ENCODE measurements at regions of chr6 and their contacts with region 1.

Region 1: DNA sequence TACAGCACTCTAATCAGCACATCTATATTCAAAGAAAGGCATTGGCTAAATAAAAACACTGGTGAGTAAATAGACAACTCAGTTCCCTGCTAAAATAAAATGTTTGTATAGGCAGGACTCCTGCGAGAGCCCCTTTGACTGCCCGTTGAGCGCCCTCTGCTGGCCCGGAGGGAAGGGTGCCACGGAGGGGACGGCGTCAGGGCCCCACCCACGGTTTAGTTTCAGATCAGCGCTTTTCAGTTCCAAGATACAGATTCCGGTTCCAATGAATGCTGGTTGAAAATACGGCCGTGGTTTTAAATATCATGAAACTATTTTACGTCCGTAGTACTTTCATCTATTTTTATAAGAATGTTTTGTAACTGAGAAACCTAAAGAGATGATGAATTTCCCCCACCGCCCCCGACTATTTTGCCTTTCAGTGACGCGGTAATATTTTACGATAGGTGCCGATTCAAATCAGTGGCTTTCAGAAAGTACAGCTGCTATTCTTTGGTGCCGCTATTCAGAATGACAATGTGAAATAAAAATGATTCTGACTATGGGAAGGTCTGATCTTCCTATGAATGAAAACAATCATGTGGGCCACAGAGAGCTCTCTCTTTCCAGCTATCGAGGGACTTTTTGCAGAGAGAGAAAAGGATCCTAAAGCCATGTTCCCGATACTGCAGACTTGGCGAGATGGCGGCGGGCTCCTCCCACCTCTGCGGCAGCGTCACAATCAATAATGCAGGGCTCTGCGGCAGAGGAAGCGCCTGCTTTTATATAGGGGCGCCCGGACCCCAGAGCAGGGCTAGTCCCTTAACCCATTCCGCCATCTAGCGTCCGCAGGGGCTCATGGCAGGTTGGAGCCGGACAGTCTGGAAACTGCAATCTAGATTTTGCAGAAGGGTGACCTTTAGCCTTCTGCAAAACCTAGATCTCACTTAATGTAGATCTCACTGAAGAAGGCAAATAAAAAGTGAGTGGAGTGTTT is 10.6 kb upstream of the CCN6 start:
- DNase-seq: peak; percentile 45
- ATAC-seq: peak; percentile 97
- H3K4me3 ChIP-seq: peak overlapping the region; percentile 94
- H3K27ac ChIP-seq: peak overlapping the region; percentile 51
- H3K4me1 ChIP-seq: no peaks in the 10 kb centered on the region
- H3K27me3 ChIP-seq: no peaks in the 10 kb centered on the region
- CTCF ChIP-seq: peak; percentile 97 to 98 (median 97)
- EP300 ChIP-seq: peak in 1 of 2 experiments; percentile 50; a peak in 1 of 4 replicates
- POLR2A ChIP-seq: 0 out of 2 replicates have a peak, but pooled peaks have one; percentile 32
- RAD21 ChIP-seq: peak; percentile 98

Region 2: GRCh38 chr6:111057074-111057752 is 986.1 kb before region 1 on chr6:
- CTCF ChIA-PET with region 1: interaction called, 3 read pairs
- POLR2A ChIA-PET with region 1: no interaction called
- RAD21 ChIA-PET with region 1: interaction called, 3 read pairs
- SMC1A ChIA-PET with region 1: interaction called, 3 read pairs
- in situ Hi-C with region 1: no loop called
- intact Hi-C with region 1: loop called (anchors 2 kb)
- DNase-seq: no peak
- ATAC-seq: peak; percentile 96
- H3K4me3 ChIP-seq: no peak overlapping the region
- H3K27ac ChIP-seq: no peak overlapping the region
- H3K4me1 ChIP-seq: no peaks in the 10 kb centered on the region
- H3K27me3 ChIP-seq: no peaks in the 10 kb centered on the region
- CTCF ChIP-seq: peak; percentile 73 to 90 (median 86)
- EP300 ChIP-seq: no peak
- POLR2A ChIP-seq: no peak
- RAD21 ChIP-seq: peak; percentile 79

Region 3: GRCh38 chr6:111478749-111479148 is 564.6 kb before region 1 on chr6:
- CTCF ChIA-PET with region 1: interaction called, 9 read pairs
- POLR2A ChIA-PET with region 1: no interaction called
- RAD21 ChIA-PET with region 1: interaction called, 16 read pairs
- SMC1A ChIA-PET with region 1: interaction called, 3 read pairs
- in situ Hi-C with region 1: no loop called
- intact Hi-C with region 1: loop called (anchors 1 kb)
- DNase-seq: peak; percentile 49
- ATAC-seq: peak; percentile 60
- H3K4me3 ChIP-seq: 0 out of 2 replicates have a peak overlapping the region, but pooled peaks have one; percentile 0
- H3K27ac ChIP-seq: peak overlapping the region; percentile 5
- H3K4me1 ChIP-seq: peaks cover 12% of the 10 kb centered on the region; the same call in 1 of the 2 replicates
- H3K27me3 ChIP-seq: no peaks in the 10 kb centered on the region
- CTCF ChIP-seq: peak; percentile 33 to 71 (median 63); a peak in 4 of 6 replicates
- EP300 ChIP-seq: no peak
- POLR2A ChIP-seq: no peak
- RAD21 ChIP-seq: peak; percentile 70

Region 4: DNA sequence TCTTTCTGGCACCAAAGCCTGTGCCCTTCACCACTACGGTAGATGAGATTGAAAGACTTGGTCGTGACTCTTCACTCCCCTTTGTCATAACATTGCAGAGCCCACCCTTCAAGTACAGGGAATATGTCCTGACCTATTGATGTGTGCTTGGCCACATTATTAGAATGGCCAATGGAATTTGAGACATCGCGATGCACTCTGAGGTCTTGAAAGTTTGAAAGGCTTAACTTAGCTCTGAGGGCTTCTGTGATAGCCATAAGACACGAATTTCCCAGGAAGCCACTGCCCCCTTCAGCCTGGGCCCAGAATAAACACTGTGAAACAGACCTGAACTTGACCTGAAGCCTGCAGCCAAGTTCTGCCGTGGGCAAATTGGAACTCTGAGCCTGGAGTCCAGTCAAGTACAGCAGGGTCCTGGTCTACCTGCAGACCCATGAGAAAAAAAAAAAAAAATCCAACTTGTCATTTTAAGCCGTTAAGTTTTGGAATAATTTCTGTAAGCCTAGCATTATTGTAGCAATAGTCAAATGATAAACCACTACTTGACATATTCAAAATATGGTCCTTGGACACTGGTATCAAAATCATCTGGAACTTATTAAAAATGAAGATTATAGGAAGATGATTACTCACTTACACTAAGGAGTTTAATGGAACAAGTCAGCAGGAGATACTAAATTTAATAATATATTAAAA is 400.7 kb before region 1 on chr6:
- CTCF ChIA-PET with region 1: interaction called, 3 read pairs
- POLR2A ChIA-PET with region 1: interaction called, 4 read pairs
- RAD21 ChIA-PET with region 1: interaction called, 5 read pairs
- SMC1A ChIA-PET with region 1: interaction called, 5 read pairs
- in situ Hi-C with region 1: no loop called
- intact Hi-C with region 1: loop called (anchors 5 kb)
- DNase-seq: peak; percentile 21
- ATAC-seq: peak; percentile 95
- H3K4me3 ChIP-seq: no peak overlapping the region
- H3K27ac ChIP-seq: no peak overlapping the region
- H3K4me1 ChIP-seq: no peaks in the 10 kb centered on the region
- H3K27me3 ChIP-seq: no peaks in the 10 kb centered on the region
- CTCF ChIP-seq: peak; percentile 57 to 77 (median 65)
- EP300 ChIP-seq: no peak
- POLR2A ChIP-seq: no peak
- RAD21 ChIP-seq: peak; percentile 75

Region 5: DNA sequence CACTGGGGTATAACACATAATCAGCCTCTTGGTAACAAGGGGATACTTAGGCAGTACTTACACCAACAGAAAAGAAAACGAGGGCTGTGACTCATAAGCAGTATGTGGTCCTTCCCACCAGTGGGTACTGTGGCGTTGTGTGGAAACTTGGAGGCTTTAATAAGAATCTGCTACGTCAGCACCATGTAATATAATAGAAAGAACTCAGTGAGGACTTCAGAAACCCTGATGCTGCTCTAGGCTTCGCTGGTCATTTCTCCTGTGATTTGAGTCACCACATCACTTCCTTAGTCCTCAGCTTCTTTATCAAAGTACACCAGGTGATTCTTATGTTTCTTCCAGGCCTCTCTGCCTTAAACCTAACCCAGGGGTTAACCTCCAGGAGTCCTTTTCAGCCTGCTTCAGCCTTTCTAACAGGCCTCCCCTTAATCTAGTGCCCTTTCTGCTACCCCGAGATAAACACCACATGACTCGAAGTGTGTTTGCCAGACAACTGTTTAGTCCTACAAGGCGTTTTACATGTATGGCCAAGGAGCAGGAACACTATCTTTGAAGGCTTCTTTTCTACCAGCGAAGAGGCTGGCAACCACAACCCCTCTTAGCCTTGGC is 238.6 kb before region 1 on chr6:
- CTCF ChIA-PET with region 1: interaction called, 4 read pairs
- POLR2A ChIA-PET with region 1: no interaction called
- RAD21 ChIA-PET with region 1: interaction called, 6 read pairs
- SMC1A ChIA-PET with region 1: interaction called, 5 read pairs
- in situ Hi-C with region 1: no loop called
- intact Hi-C with region 1: loop called (anchors 2 kb)
- DNase-seq: peak; percentile 84
- ATAC-seq: peak; percentile 77
- H3K4me3 ChIP-seq: no peak overlapping the region
- H3K27ac ChIP-seq: peak overlapping the region; percentile 70
- H3K4me1 ChIP-seq: peaks cover 70% of the 10 kb centered on the region
- H3K27me3 ChIP-seq: no peaks in the 10 kb centered on the region
- CTCF ChIP-seq: peak in 2 of 3 experiments; percentile 24 to 35; a peak in 2 of 6 replicates
- EP300 ChIP-seq: peak; percentile 65 to 88; a peak in 2 of 4 replicates
- POLR2A ChIP-seq: no peak
- RAD21 ChIP-seq: peak; percentile 62

Region 6: DNA sequence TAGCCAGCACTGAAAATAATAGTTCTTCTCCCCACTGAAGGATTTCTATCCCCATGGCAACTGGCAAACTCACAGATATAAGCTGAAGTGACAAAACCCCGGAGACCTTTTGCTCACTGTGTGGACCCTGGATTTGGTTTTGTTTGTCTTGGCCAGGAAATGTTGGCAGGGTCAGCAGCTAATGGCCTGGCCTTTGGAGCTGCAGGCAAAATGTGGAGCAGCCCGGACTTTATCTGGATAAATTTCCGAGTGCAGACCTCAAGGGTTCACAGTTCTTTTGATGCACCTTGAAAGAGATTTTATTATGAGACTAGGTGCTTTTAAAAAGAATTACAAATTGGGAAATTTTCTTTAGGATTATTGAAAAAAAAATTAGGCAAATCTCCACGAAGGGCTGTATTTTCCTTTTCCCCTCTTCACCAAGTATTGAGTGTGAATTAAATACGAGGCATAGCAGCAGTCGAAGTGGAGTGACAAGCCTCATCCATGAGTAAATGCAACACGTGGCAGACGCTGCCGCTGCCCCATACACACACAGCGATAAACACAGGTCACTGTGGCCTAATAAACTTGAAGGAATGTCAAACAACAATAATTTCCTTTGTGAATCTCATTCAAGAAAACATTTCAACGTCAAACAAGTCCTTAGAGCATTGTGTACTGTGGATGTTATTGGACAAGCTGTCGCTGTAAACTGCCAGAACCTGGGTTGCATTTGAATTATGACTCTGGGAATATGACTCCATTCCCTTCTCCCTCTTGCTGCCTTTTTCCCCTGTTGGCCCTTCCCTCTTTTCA is 24.5 kb before region 1 on chr6:
- CTCF ChIA-PET with region 1: interaction called, 55 read pairs
- POLR2A ChIA-PET with region 1: interaction called, 3 read pairs
- RAD21 ChIA-PET with region 1: interaction called, 12 read pairs
- SMC1A ChIA-PET with region 1: interaction called, 10 read pairs
- in situ Hi-C with region 1: no loop called
- intact Hi-C with region 1: no loop called
- DNase-seq: no peak
- ATAC-seq: no peak
- H3K4me3 ChIP-seq: no peak overlapping the region
- H3K27ac ChIP-seq: no peak overlapping the region
- H3K4me1 ChIP-seq: peaks cover 16% of the 10 kb centered on the region; the same call in 1 of the 2 replicates
- H3K27me3 ChIP-seq: no peaks in the 10 kb centered on the region
- CTCF ChIP-seq: no peak
- EP300 ChIP-seq: no peak
- POLR2A ChIP-seq: no peak
- RAD21 ChIP-seq: no peak

Measured in GM12878 (cell line).